ENCODE measurements at regions of chr7 and their contacts with region 1.

Region 1: GRCh38 chr7:149067876-149068275 is 22.6 kb downstream of the ZNF786 start:
- DNase-seq: no peak
- ATAC-seq: no peak
- H3K4me3 ChIP-seq: no peak overlapping the region
- H3K27ac ChIP-seq: no peak overlapping the region
- H3K4me1 ChIP-seq: no peaks in the 10 kb centered on the region
- H3K27me3 ChIP-seq: no peaks in the 10 kb centered on the region

Region 2: GRCh38 chr7:148954766-148955165 is 113.1 kb before region 1 on chr7:
- intact Hi-C with region 1: no loop called
- DNase-seq: no peak
- ATAC-seq: no peak
- H3K4me3 ChIP-seq: no peak overlapping the region
- H3K27ac ChIP-seq: no peak overlapping the region
- H3K4me1 ChIP-seq: no peaks in the 10 kb centered on the region
- H3K27me3 ChIP-seq: no peaks in the 10 kb centered on the region

Region 3: GRCh38 chr7:149028346-149029109 is 39.3 kb before region 1 on chr7 and contains the start of gene PDIA4:
- intact Hi-C with region 1: loop called in 1 of 4 experiments (anchors 2 kb)
- DNase-seq: peak; percentile 99 to 100 (median 100)
- ATAC-seq: peak; percentile 98
- H3K4me3 ChIP-seq: peak within 1 kb of the TSS; percentile 78
- H3K27ac ChIP-seq: peak within 1 kb of the TSS; percentile 88
- H3K4me1 ChIP-seq: peaks cover 2% of the 10 kb centered on the region
- H3K27me3 ChIP-seq: no peaks in the 10 kb centered on the region
- total RNA-seq, gene PDIA4: 33.0 to 69.2 (median 46.3) TPM

Region 4: GRCh38 chr7:149125863-149126661 is 58.2 kb after region 1 on chr7 and contains the start of gene ZNF425:
- intact Hi-C with region 1: no loop called
- DNase-seq: peak; percentile 94 to 98 (median 97)
- ATAC-seq: peak; percentile 95
- H3K4me3 ChIP-seq: peak within 1 kb of the TSS; percentile 45
- H3K27ac ChIP-seq: peak within 1 kb of the TSS; percentile 78
- H3K4me1 ChIP-seq: no peaks in the 10 kb centered on the region
- H3K27me3 ChIP-seq: no peaks in the 10 kb centered on the region
- total RNA-seq, gene ZNF425: 0.72 to 0.99 (median 0.81) TPM

Measured in right cardiac atrium (tissue), 5 donors.